Activated T-helper 2 cell treated with anti-CD3 and anti-CD28 coated beads, Interferon-gamma antibody, Interleukin-2, Interleukin-4, amounts not matched to agents 10 μg/mL and 5 μg/mL and 100 μg/mL, durations not matched to agents 14 hours and 24 hours and 36 hours (primary cell): ENCODE measurements at regions of chr17 and their contacts with region 1.

Region 1: DNA sequence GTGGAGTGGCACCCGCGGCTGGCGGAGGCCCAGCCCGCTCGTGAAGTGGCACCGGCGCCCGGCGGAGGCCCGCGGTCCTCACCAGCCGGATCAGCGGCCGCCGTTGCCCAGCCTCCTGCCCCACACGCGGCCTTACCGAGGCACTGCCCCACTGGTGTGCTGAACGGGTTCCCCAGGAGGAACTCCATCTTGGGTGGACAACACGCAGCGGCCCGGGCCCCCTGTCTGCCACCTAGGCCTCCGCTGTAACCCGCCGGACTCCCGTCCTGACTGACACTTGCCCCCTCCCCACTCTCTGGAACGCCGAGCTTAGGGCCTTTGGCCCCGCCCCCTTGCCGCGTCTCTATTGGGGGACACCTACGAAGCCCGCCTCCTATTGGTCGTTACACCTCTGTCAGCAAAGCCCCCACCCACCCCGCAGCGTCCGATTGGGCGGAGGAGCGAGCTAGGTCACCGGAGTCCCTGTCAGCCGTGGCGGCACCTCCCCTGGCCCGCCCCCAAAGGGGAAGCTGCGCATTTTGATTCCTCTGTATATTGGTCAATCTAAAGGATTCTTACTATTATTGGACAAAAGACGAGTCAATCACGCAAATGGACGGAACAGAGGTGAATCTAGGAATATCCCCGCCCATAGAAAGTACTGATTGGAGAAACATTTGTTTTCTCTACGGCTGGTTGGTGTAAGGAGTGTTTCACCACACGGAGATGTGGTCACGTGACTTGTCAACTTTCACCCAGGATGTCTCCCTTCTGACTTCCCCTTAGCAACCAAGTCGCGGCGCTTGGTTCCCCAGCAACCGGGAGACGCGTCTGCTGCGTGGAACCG is at the starts of genes DRC3 and TOM1L2:
- DNase-seq: peak; percentile 100
- H3K4me3 Mint-ChIP-seq: peak within 1 kb of the TSS; percentile 91
- H3K27ac Mint-ChIP-seq: peak within 1 kb of the TSS; percentile 80
- H3K4me1 Mint-ChIP-seq: peaks cover 27% of the 10 kb centered on the region
- H3K27me3 Mint-ChIP-seq: no peaks in the 10 kb centered on the region
- total RNA-seq, gene DRC3: not detected in 2 replicates
- total RNA-seq, gene TOM1L2: 9.4 and 13.4 TPM in 2 replicates

Region 2: GRCh38 chr17:17752089-17752820 is 220.1 kb before region 1 on chr17:
- intact Hi-C with region 1: loop called (anchors 1 kb)
- DNase-seq: peak; percentile 96
- H3K4me3 Mint-ChIP-seq: peak overlapping the region; percentile 89
- H3K27ac Mint-ChIP-seq: peak overlapping the region; percentile 93
- H3K4me1 Mint-ChIP-seq: peaks cover 39% of the 10 kb centered on the region
- H3K27me3 Mint-ChIP-seq: no peaks in the 10 kb centered on the region

Region 3: DNA sequence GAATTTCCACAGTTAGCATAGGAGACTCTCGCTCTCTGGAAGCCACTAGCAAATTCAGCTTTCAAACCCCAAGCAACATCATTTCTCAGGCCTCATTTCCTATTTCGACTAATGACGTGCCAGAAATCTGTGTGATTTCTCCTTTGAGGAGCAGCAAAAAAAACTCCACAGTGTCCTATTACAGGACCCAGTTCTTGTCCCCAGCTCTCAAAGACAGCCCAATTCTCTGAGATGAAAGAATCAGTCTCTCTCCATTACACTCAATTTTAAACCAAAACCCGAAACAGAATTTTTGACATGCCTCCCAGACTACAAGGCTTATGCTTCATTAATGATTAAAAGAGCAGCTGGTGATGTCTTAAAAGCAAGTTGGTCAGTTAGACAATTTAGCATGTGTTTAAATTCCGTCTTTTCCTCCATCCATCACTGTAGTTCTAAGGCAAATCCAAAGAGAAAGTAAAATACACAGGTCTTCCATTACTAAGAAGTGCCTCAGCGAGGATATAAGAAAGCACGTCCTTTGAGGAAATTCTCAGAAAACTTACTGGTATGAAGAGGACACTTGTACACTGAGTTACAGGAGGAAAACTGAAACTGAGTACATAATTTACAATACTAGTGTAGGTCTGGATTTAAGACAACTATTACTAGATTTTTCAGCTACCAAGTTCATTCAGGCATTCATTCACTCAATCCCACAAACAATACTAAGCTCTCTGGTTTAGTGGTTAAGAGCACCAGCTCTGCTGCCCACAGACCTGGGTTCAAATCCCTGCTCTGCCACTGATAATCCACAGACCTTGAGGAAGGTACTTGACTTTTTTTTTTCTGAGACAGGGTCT is 12.6 kb before region 1 on chr17:
- intact Hi-C with region 1: loop called (anchors 1 kb)
- DNase-seq: no peak
- H3K4me3 Mint-ChIP-seq: peak overlapping the region; percentile 86
- H3K27ac Mint-ChIP-seq: peak overlapping the region; percentile 99
- H3K4me1 Mint-ChIP-seq: peaks cover 52% of the 10 kb centered on the region
- H3K27me3 Mint-ChIP-seq: no peaks in the 10 kb centered on the region

Region 4: GRCh38 chr17:18033442-18034099 is 61.2 kb after region 1 on chr17:
- intact Hi-C with region 1: loop called (anchors 1 kb)
- DNase-seq: peak; percentile 35
- H3K4me3 Mint-ChIP-seq: no peak overlapping the region
- H3K27ac Mint-ChIP-seq: no peak overlapping the region
- H3K4me1 Mint-ChIP-seq: peaks cover 28% of the 10 kb centered on the region
- H3K27me3 Mint-ChIP-seq: no peaks in the 10 kb centered on the region